ENCODE measurements at regions of chr15 and their contacts with region 1.

Region 1: GRCh38 chr15:34223904-34224596 is 766 bp upstream of the EMC4 start:
- DNase-seq: no peak
- H3K4me3 ChIP-seq: peak overlapping the region; percentile 84 to 97 (median 88)
- H3K27ac ChIP-seq: peak overlapping the region; percentile 87 to 93 (median 90)
- H3K4me1 ChIP-seq: peaks cover 0 to 16% (median 15%) of the 10 kb centered on the region in 4 donors
- H3K27me3 ChIP-seq: no peaks in the 10 kb centered on the region
- CTCF ChIP-seq: no peak
- EP300 ChIP-seq: no peak
- POLR2A ChIP-seq: no peak

Region 2: GRCh38 chr15:34101366-34102175 is 122.5 kb before region 1 on chr15 and contains the starts of genes EMC7 and PGBD4:
- intact Hi-C with region 1: loop called (anchors 1 kb)
- DNase-seq: peak; percentile 99
- H3K4me3 ChIP-seq: peak within 1 kb of the TSS; percentile 65 to 89 (median 72)
- H3K27ac ChIP-seq: peak within 1 kb of the TSS; percentile 81 to 89 (median 86)
- H3K4me1 ChIP-seq: peaks cover 4 to 30% (median 24%) of the 10 kb centered on the region in 4 donors
- H3K27me3 ChIP-seq: no peaks in the 10 kb centered on the region
- CTCF ChIP-seq: no peak
- EP300 ChIP-seq: peak in 1 of 4 donors; percentile 6
- POLR2A ChIP-seq: peak; percentile 52 to 64
- total RNA-seq, gene EMC7: 34.8 to 55.1 (median 47.7) TPM
- total RNA-seq, gene PGBD4: 0.54 to 1.4 (median 1.4) TPM

Region 3: GRCh38 chr15:34209421-34210282 is 14.4 kb before region 1 on chr15 and contains the start of gene KATNBL1:
- intact Hi-C with region 1: loop called (anchors 2 kb)
- DNase-seq: peak; percentile 97
- H3K4me3 ChIP-seq: peak within 1 kb of the TSS; percentile 58 to 75 (median 70)
- H3K27ac ChIP-seq: peak within 1 kb of the TSS; percentile 86 to 91 (median 88)
- H3K4me1 ChIP-seq: peaks cover 0 to 14% (median 10%) of the 10 kb centered on the region in 4 donors
- H3K27me3 ChIP-seq: no peaks in the 10 kb centered on the region
- CTCF ChIP-seq: peak; percentile 83 to 94 (median 90)
- EP300 ChIP-seq: no peak
- POLR2A ChIP-seq: peak; percentile 31 to 48
- total RNA-seq, gene KATNBL1: 39.5 to 88.9 (median 68.2) TPM

Region 4: GRCh38 chr15:34337557-34338306 is 113.7 kb after region 1 on chr15 and contains the start of gene SLC12A6:
- intact Hi-C with region 1: loop called (anchors 5 kb)
- DNase-seq: peak; percentile 94
- H3K4me3 ChIP-seq: peak within 1 kb of the TSS; percentile 93 to 96 (median 94)
- H3K27ac ChIP-seq: peak within 1 kb of the TSS; percentile 89 to 91 (median 90)
- H3K4me1 ChIP-seq: peaks cover 0 to 47% (median 28%) of the 10 kb centered on the region in 4 donors
- H3K27me3 ChIP-seq: no peaks in the 10 kb centered on the region
- CTCF ChIP-seq: no peak
- EP300 ChIP-seq: no peak
- POLR2A ChIP-seq: no peak
- total RNA-seq, gene SLC12A6: 14.3 to 22.7 (median 20.0) TPM

Region 5: DNA sequence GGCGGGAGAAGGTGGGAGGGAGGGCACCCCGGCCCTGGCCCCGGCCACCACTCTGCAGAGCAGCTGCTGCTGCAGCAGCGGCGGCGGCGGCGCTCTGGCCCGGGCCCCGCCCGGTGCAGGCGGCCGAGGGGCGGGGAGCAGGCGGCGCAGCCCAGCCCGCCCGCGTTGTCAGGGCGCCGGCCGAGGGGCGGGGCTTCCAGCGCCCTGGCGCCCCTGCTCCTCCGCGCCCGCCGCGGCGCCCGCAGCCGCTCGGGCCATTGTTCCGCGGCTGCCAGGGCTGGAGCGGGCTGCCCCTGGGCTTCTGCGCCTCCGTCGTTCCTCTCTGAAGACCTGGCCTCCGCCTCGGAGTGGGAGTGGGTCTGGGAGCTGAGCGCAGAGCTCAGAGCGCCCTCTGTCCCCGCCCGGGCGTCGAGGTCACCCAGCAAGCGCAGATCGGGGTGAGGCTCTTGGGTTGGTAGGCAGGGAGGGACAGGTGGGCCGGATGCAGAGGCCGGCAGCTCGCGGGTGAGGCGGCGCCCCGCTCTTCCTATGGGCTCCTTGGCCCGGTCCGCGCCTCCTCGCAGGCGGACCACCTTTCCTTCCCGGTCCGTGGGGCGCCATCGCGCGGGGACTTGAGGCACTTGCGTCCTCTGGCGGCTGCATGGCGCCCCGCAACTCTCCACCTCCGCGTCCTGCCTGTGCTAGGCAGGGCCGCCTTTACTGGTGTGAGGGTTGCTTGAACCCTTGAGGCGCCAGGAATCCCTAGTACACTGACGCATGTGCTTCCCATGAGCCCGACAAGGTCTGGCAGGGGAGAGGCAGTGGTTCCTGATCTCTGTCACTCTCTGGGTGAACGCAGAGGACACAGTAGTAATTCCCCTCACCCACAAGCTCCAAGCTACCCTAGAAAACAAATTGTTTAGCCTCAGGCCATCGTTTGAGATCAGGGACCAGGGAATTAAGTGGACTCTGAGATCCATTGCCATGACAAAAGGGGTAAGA is 143.3 kb after region 1 on chr15 and contains the start of gene LPCAT4:
- intact Hi-C with region 1: loop called (anchors 10 kb)
- DNase-seq: peak; percentile 94
- H3K4me3 ChIP-seq: peak within 1 kb of the TSS; percentile 86 to 90 (median 87)
- H3K27ac ChIP-seq: peak within 1 kb of the TSS; percentile 96 to 97 (median 97)
- H3K4me1 ChIP-seq: peaks cover 0 to 23% (median 19%) of the 10 kb centered on the region in 4 donors
- H3K27me3 ChIP-seq: no peaks in the 10 kb centered on the region
- CTCF ChIP-seq: peak; percentile 92 to 97 (median 96)
- EP300 ChIP-seq: no peak
- POLR2A ChIP-seq: peak; percentile 22 to 35
- total RNA-seq, gene LPCAT4: 9.6 to 25.2 (median 15.6) TPM

Region 6: DNA sequence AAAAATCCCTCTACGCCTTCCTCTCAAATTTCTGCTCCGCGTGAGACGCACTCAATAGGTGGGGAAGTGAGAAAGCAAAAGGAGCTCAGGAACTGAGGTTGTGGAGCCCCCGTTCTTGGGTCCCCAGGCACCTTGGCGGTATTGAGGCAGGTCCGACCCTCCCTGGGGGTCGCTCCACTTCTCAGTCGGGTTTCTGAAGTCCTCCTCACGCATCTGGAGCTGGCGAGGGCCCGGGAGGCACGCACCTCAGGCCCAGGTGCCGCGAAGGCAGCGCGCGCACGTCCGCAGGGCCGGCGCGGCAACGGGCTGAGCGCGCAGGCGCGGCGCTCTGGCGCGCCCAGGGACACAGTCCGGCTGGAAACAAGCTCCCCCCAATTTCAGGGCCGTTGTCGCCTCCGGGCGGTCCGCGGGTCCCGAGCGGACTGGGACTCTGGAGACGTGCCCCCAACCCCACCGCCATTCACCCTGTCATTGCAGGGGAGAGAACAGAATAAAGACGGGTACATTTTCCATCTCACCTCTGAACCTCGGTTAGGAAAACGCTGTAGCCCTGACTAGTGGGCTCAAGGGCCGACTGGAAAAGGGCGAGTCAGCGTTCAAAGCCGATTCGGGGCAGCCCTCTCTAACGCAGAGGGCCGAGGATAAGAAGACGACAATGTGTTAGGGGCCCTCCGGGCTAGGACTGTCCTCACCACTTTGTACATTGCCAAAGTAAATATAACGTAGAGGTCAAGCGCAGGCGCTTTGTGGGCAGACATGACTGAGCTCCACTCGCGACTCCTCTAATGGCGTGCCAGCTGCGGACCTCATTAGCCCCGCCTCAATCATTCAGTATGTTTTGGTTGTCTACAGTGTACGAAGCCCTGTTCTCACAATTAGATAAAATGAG is 764.2 kb after region 1 on chr15 and contains the start of gene ZNF770:
- intact Hi-C with region 1: loop called (anchors 10 kb)
- DNase-seq: peak; percentile 87
- H3K4me3 ChIP-seq: peak within 1 kb of the TSS; percentile 71 to 82 (median 74)
- H3K27ac ChIP-seq: peak within 1 kb of the TSS; percentile 91 to 95 (median 93)
- H3K4me1 ChIP-seq: peaks cover 0 to 36% (median 30%) of the 10 kb centered on the region in 4 donors
- H3K27me3 ChIP-seq: no peaks in the 10 kb centered on the region
- CTCF ChIP-seq: no peak
- EP300 ChIP-seq: no peak
- POLR2A ChIP-seq: peak; percentile 37 to 41
- total RNA-seq, gene ZNF770: 15.9 to 21.4 (median 19.1) TPM

Measured in sigmoid colon (tissue), 7 donors.